Left colon (tissue), 2 donors: ENCODE measurements at regions of chr14 and their contacts with region 1.

Region 1: GRCh38 chr14:49786315-49787110 is 18.6 kb downstream of the KLHDC2 start:
- DNase-seq: no peak
- ATAC-seq: no peak

Region 2: DNA sequence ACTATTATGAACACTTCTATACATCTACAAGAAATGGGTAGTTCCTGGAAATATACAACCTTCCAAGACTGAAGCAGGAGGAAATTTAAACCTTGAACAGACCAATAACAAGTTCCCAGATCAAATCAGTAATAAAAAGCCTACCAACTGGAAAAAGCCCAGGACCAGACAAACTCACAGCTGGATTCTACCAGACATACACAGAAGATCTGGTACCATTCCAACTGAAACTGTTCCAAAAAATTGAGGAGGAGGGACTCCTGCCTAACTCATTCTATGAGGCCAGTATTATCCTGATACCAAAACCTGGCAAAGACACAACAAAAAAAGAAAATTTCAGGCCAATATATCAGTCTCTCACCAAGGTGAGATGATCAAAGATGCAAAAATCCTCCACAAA is 389.7 kb before region 1 on chr14:
- intact Hi-C with region 1: no loop called
- DNase-seq: no peak
- ATAC-seq: no peak

Region 3: GRCh38 chr14:49677643-49678042 is 108.9 kb before region 1 on chr14:
- intact Hi-C with region 1: no loop called
- DNase-seq: no peak
- ATAC-seq: no peak

Region 4: GRCh38 chr14:49828640-49829039 is 42.1 kb after region 1 on chr14:
- intact Hi-C with region 1: loop called in 1 of 2 experiments (anchors 10 kb)
- DNase-seq: no peak
- ATAC-seq: no peak